ENCODE measurements at regions of chr2 and their contacts with region 1.

Region 1: DNA sequence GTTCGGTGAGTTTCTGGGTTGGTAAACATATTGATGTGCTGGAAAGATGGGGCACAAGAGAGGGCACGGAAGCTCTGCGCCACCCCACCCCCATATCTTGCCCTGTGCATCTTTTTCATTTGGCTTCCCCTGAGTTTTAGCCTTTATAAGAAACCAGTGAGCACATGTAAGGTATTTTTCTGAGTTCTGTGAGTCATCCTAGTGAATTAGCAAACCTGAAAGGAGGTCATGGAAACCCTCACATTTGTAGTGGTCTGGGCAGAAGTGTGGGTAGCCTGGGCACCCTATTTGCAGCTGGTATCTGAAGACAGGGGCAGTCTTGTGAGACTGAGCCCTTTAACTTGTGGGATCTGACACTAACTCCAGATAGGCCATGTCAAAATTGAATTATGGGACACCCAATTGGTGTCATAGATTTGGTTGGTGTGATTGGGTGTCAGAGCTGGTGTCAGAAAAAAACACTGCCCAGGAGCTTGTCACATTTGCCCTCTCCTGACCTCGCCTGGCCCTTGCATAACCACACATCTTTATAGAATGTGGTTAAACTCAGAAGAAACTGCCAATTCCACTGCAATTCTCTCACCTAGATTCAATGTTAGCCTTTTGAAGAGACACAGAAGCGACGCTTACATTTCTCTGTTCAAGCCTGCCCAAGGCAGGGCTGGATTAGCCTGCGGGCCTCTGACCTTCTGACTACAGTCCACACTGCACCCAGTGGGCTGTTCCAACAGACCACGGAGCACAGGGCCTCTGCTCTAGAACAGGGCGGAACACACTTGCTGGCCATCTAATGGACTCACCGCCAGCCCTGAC is 12.0 kb upstream of the GALM start:
- DNase-seq: peak; percentile 66 to 82 (median 70)
- H3K4me3 ChIP-seq: peak overlapping the region in 1 of 2 donors; percentile 18
- H3K4me3 Mint-ChIP-seq: peak overlapping the region in 7 of 8 donors; percentile 61 to 87 (median 80)
- H3K27ac ChIP-seq: peak overlapping the region; percentile 51
- H3K27ac Mint-ChIP-seq: peak overlapping the region; percentile 87 to 97 (median 97)
- H3K4me1 ChIP-seq: peaks cover 56% of the 10 kb centered on the region
- H3K4me1 Mint-ChIP-seq: peaks cover 32 to 71% (median 50%) of the 10 kb centered on the region in 4 donors
- H3K27me3 ChIP-seq: no peaks in the 10 kb centered on the region
- H3K27me3 Mint-ChIP-seq: no peaks in the 10 kb centered on the region

Region 2: GRCh38 chr2:38626326-38627035 is 27.4 kb before region 1 on chr2:
- CTCF ChIA-PET with region 1: interaction called, 4 read pairs
- POLR2A ChIA-PET with region 1: interaction called, 14 read pairs
- intact Hi-C with region 1: no loop called
- DNase-seq: peak; percentile 56 to 71 (median 64)
- H3K4me3 ChIP-seq: no peak overlapping the region
- H3K4me3 Mint-ChIP-seq: peak overlapping the region in 7 of 8 donors; percentile 22 to 70 (median 57)
- H3K27ac ChIP-seq: peak overlapping the region; percentile 7
- H3K27ac Mint-ChIP-seq: peak overlapping the region; percentile 43 to 89 (median 82)
- H3K4me1 ChIP-seq: peaks cover 21% of the 10 kb centered on the region
- H3K4me1 Mint-ChIP-seq: peaks cover 20 to 29% (median 26%) of the 10 kb centered on the region in 4 donors
- H3K27me3 ChIP-seq: no peaks in the 10 kb centered on the region
- H3K27me3 Mint-ChIP-seq: no peaks in the 10 kb centered on the region

Region 3: DNA sequence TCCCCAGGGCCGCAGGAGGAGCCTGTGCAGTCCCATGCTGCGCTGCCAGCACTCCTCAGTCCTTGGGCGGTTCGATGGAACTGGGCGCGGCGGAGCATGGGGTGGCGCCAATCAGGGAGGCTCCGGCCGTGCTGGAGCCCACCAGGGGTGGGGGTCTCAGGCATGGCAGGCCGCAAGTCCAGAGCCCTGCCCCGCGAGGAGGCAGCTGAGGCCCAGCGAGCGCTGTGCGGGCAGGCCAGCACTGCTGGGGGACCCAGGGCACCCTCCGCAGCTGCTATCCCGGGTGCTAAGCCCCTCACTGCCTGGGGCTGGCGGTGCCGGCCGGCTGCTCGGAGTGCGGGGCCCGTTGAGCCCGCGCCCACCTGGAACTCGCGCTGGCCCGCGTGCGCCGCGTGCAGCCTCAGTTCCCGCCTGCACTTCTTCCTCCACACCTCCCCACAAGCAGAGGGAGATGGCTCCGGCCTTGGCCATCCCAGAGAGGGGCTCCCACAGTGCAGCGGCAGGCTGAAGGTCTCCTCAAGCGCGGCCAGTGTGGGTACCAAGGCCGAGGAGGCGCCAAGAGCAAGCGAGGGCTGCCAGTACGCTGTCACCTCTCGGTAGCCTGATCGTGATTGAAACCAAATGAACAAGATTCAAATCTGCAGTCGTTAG is 10.8 kb before region 1 on chr2:
- CTCF ChIA-PET with region 1: interaction called, 5 read pairs
- POLR2A ChIA-PET with region 1: interaction called, 29 read pairs
- intact Hi-C with region 1: no loop called
- DNase-seq: peak in 1 of 5 donors; percentile 5
- H3K4me3 ChIP-seq: peak overlapping the region in 1 of 2 donors; percentile 12
- H3K4me3 Mint-ChIP-seq: peak overlapping the region in 6 of 8 donors; percentile 68 to 89 (median 77)
- H3K27ac ChIP-seq: peak overlapping the region; percentile 51
- H3K27ac Mint-ChIP-seq: peak overlapping the region; percentile 73 to 97 (median 95)
- H3K4me1 ChIP-seq: peaks cover 30% of the 10 kb centered on the region
- H3K4me1 Mint-ChIP-seq: peaks cover 17 to 39% (median 26%) of the 10 kb centered on the region in 4 donors
- H3K27me3 ChIP-seq: no peaks in the 10 kb centered on the region
- H3K27me3 Mint-ChIP-seq: no peaks in the 10 kb centered on the region

Region 4: GRCh38 chr2:38829971-38830370 is 176.1 kb after region 1 on chr2:
- CTCF ChIA-PET with region 1: no interaction called
- POLR2A ChIA-PET with region 1: no interaction called
- intact Hi-C with region 1: no loop called
- DNase-seq: no peak
- H3K4me3 ChIP-seq: no peak overlapping the region
- H3K4me3 Mint-ChIP-seq: no peak overlapping the region
- H3K27ac ChIP-seq: no peak overlapping the region
- H3K27ac Mint-ChIP-seq: no peak overlapping the region
- H3K4me1 ChIP-seq: no peaks in the 10 kb centered on the region
- H3K4me1 Mint-ChIP-seq: no peaks in the 10 kb centered on the region
- H3K27me3 ChIP-seq: no peaks in the 10 kb centered on the region
- H3K27me3 Mint-ChIP-seq: no peaks in the 10 kb centered on the region